ENCODE measurements at regions of chr4 and their contacts with region 1.

Region 1: DNA sequence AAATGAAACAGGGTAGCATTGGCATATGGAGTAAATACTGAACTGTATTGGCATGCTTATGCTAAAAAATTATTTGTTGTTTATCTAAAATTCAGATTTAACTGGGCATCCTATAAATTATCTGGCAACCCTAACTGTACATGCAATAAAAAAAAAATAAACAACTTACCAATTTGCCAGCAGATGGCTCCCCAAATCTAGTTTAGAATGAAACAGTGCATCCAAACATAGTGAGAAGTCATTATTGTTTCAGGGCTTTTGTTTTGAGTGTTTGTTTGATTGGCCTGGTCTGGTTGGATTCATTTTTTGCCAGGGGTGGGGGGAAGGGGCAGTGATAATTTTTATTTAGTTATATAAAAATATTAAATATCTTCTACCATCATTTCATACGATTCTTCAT is 12.8 kb upstream of the NSUN7 start:
- DNase-seq: peak; percentile 22
- ATAC-seq: peak; percentile 40; the same call in 1 of the 2 replicates
- H3K4me3 ChIP-seq: no peak overlapping the region
- H3K27ac ChIP-seq: no peak overlapping the region
- H3K4me1 ChIP-seq: no peaks in the 10 kb centered on the region
- H3K27me3 ChIP-seq: peaks cover 8% of the 10 kb centered on the region
- CTCF ChIP-seq: peak; percentile 44
- POLR2A ChIP-seq: no peak
- RAD21 ChIP-seq: peak; percentile 51

Region 2: GRCh38 chr4:40897557-40898203 is 160.8 kb after region 1 on chr4:
- CTCF ChIA-PET with region 1: no interaction called
- POLR2A ChIA-PET with region 1: no interaction called
- dilution Hi-C with region 1: no loop called
- in situ Hi-C with region 1: no loop called
- intact Hi-C with region 1: loop called (anchors 1 kb)
- DNase-seq: peak; percentile 51
- ATAC-seq: peak; percentile 74
- H3K4me3 ChIP-seq: no peak overlapping the region
- H3K27ac ChIP-seq: no peak overlapping the region
- H3K4me1 ChIP-seq: peaks cover 2% of the 10 kb centered on the region
- H3K27me3 ChIP-seq: no peaks in the 10 kb centered on the region
- CTCF ChIP-seq: peak; percentile 62
- POLR2A ChIP-seq: no peak
- RAD21 ChIP-seq: peak; percentile 50

Region 3: GRCh38 chr4:40908702-40909362 is 171.9 kb after region 1 on chr4:
- CTCF ChIA-PET with region 1: no interaction called
- POLR2A ChIA-PET with region 1: no interaction called
- dilution Hi-C with region 1: no loop called
- in situ Hi-C with region 1: loop called (anchors 5 kb)
- intact Hi-C with region 1: no loop called
- DNase-seq: peak; percentile 76
- ATAC-seq: peak; percentile 80
- H3K4me3 ChIP-seq: no peak overlapping the region
- H3K27ac ChIP-seq: no peak overlapping the region; the same call in 1 of the 2 replicates
- H3K4me1 ChIP-seq: peaks cover 12% of the 10 kb centered on the region
- H3K27me3 ChIP-seq: no peaks in the 10 kb centered on the region
- CTCF ChIP-seq: peak; percentile 89
- POLR2A ChIP-seq: no peak
- RAD21 ChIP-seq: peak; percentile 83

Region 4: DNA sequence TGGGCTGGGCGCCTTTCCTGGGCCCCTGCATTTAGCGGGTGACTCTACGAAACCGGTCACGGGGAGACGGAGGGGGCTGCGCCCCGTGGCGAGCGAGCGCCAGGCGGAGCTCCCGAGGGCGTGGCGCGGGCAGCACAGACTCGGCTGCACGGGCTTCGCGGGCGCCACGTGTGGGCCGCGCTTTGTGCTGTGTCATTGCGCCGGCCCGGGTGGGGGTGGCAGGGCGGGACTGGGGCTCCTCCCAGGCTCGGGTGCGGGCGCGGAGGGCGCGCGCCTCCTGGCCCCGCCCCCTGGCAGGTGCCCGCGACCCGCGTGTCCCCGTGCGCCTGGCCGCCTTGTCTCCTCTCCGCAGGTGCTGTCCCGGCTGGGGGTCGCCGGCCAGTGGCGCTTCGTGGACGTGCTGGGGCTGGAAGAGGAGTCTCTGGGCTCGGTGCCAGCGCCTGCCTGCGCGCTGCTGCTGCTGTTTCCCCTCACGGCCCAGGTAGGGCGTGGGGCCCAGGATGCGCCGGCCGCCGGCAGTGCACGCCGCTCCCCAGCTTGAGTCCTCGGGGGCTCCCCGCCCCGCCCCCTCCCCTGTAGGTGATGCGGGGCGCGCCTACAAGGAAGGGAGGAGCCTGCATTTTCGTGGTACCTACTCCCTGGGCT is 520.5 kb after region 1 on chr4:
- CTCF ChIA-PET with region 1: no interaction called
- POLR2A ChIA-PET with region 1: no interaction called
- dilution Hi-C with region 1: no loop called
- in situ Hi-C with region 1: no loop called
- intact Hi-C with region 1: loop called (anchors 10 kb)
- DNase-seq: peak; percentile 52
- ATAC-seq: peak; percentile 69
- H3K4me3 ChIP-seq: peak overlapping the region; percentile 94
- H3K27ac ChIP-seq: peak overlapping the region; percentile 84
- H3K4me1 ChIP-seq: peaks cover 4% of the 10 kb centered on the region
- H3K27me3 ChIP-seq: no peaks in the 10 kb centered on the region
- CTCF ChIP-seq: no peak
- POLR2A ChIP-seq: no peak
- RAD21 ChIP-seq: no peak

Region 5: GRCh38 chr4:41661442-41662076 is 924.6 kb after region 1 on chr4:
- CTCF ChIA-PET with region 1: no interaction called
- POLR2A ChIA-PET with region 1: no interaction called
- dilution Hi-C with region 1: no loop called
- in situ Hi-C with region 1: no loop called
- intact Hi-C with region 1: loop called (anchors 5 kb)
- DNase-seq: peak; percentile 48
- ATAC-seq: peak; percentile 91
- H3K4me3 ChIP-seq: no peak overlapping the region
- H3K27ac ChIP-seq: no peak overlapping the region
- H3K4me1 ChIP-seq: peaks cover 4% of the 10 kb centered on the region; the same call in 1 of the 2 replicates
- H3K27me3 ChIP-seq: peaks cover 4% of the 10 kb centered on the region
- CTCF ChIP-seq: peak; percentile 89
- POLR2A ChIP-seq: no peak
- RAD21 ChIP-seq: peak; percentile 78